Activated CD4-positive, alpha-beta memory T cell treated with anti-CD3 and anti-CD28 coated beads, Interleukin-2, amount 10 ng/mL, durations not matched to agents 7 days and 5 days (primary cell): ENCODE measurements at regions of chr17 and their contacts with region 1.

Region 1: DNA sequence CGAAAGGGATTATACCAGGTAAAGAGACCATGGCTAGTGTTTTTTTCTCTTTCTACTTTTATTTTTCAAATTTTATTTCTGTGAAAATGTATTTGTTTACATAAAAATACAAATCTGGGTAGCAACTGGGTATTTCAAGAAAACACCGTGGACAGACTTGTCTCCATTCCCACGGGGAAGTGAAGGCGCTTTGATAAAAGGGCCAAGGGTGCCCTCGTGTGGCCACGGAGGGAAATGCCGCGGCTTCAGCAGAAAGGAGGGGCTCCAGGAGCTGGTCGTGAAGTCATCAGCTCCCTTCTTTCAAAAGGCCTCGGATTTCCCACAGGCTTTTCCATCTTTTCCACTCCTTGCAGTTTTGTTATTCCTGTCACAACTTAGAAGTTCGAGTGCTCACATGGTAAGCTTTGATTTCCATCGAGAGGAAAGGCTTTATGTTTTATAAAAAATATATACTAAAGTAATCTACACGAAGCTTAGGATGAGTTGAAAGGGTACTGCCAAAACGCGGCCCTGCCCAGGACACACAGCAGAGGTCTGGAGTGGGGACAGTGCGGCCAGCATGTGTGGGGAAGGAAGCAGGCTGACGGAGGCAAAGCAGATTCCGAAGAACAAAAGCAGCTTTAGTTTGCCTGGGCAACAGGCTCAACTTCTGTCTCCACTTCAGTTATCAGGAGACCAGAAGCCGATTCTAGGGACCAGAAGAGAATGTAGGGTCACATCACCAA is 15.3 kb upstream of the MNT start:
- DNase-seq: peak; percentile 88
- H3K4me3 Mint-ChIP-seq: no peak overlapping the region
- H3K27ac Mint-ChIP-seq: no peak overlapping the region
- H3K4me1 Mint-ChIP-seq: peaks cover 2% of the 10 kb centered on the region
- H3K27me3 Mint-ChIP-seq: no peaks in the 10 kb centered on the region

Region 2: DNA sequence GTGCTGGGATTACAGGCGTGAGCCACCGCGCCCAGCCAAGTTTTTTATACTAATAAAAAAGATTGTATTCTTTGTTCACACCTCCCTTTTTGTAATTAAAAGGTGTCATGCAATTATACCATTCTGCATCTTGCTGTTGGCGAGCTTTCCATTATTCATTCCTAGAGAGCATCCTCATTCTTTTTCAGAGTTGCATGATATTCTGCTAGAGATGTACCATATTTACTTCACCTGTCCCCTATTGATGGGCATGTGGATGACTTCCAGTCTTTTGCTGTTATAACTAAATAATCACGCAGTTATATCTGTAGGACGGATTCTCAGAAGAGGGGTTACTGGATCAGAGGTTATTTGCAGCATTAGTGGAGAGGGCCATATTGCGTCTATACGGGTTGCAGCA is 61.9 kb before region 1 on chr17:
- CTCF ChIA-PET with region 1: interaction called, 13 read pairs
- POLR2A ChIA-PET with region 1: no interaction called
- DNase-seq: no peak
- H3K4me3 Mint-ChIP-seq: no peak overlapping the region
- H3K27ac Mint-ChIP-seq: peak overlapping the region; percentile 79
- H3K4me1 Mint-ChIP-seq: peaks cover 17% of the 10 kb centered on the region
- H3K27me3 Mint-ChIP-seq: no peaks in the 10 kb centered on the region

Region 3: GRCh38 chr17:2392252-2393173 is 23.7 kb before region 1 on chr17:
- CTCF ChIA-PET with region 1: interaction called, 80 read pairs
- POLR2A ChIA-PET with region 1: interaction called, 31 read pairs
- DNase-seq: peak; percentile 97
- H3K4me3 Mint-ChIP-seq: peak overlapping the region; percentile 90
- H3K27ac Mint-ChIP-seq: peak overlapping the region; percentile 90
- H3K4me1 Mint-ChIP-seq: peaks cover 67% of the 10 kb centered on the region
- H3K27me3 Mint-ChIP-seq: no peaks in the 10 kb centered on the region

Region 4: DNA sequence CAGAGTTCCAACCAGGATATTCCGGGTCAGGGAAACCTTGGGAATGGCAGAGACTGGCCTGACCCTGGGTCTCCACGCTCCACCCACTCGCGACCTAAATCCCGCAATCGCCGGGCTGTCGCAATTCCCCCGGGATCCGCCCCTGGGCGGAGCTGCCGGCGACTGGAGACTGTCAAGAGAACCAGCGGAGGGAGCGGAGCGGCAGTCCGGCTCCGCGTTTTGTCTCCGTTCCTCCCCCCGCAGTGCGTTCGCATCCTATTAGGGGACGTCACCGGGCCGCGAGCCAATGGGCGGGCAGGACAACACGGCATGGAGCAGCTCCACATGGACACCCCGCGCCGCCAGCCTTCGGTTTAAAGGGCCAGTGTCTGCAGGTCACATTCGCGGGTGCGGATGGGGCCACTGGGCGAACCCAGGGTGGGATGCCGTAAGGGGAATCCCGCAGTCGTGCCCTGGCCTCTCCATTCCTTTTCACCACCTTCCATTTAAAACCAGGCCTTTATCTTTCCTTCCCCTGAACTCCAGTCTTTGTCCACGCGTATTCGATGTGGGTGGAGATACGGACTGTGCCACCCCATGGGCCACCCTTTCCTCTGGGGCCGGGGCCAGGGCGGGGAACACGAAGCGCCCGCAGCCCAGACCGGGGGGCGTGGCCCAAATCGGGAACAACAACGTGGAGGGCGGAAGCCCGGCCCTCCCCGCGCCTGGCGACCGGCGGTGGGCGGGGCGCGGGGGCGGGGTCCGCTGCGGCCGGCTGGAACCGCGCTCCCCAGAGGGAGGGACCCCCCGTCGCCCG is 14.5 kb before region 1 on chr17:
- CTCF ChIA-PET with region 1: interaction called, 80 read pairs
- POLR2A ChIA-PET with region 1: interaction called, 20 read pairs
- DNase-seq: peak; percentile 100
- H3K4me3 Mint-ChIP-seq: peak overlapping the region; percentile 97
- H3K27ac Mint-ChIP-seq: peak overlapping the region; percentile 99
- H3K4me1 Mint-ChIP-seq: peaks cover 55% of the 10 kb centered on the region
- H3K27me3 Mint-ChIP-seq: no peaks in the 10 kb centered on the region

Region 5: DNA sequence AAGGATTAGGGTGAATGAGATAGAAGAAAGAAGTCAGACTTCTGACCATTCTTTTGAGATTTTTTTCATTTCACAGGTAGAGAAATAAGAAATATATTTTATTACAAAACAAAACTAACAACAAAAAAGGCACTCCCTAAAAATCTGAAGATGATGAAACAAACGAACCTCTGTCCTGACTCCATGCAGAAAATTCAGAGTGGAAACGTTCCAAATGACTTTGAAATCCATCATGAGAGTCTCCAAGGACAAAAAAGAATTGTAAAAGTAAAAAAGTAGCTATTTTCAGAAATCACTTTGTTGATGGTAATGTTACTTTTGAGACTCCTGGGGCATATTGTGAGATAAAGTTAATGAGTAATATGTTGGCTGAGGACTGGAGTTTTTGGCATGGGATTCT is 11.0 kb after region 1 on chr17:
- CTCF ChIA-PET with region 1: interaction called, 12 read pairs
- POLR2A ChIA-PET with region 1: no interaction called
- DNase-seq: no peak
- H3K4me3 Mint-ChIP-seq: no peak overlapping the region
- H3K27ac Mint-ChIP-seq: no peak overlapping the region
- H3K4me1 Mint-ChIP-seq: no peaks in the 10 kb centered on the region
- H3K27me3 Mint-ChIP-seq: no peaks in the 10 kb centered on the region

Region 6: DNA sequence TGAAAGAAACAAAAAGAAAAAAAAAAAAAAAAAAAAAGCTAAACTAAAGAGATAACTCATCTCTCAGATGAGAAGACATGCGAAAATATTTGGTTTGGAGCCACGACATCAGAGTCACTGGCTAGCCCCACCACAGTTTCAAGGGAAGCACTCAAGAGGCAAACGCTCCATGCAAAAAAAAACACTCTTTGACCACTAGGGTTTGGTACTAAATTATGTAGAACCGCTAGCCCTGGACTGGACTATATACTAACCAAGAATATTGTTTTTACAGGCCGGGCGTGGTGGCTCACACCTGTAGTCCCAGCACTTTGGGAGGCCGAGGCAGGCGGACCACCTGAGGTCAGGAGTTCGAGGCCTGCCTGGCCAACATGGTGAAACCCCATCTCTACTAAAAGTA is 58.2 kb after region 1 on chr17:
- CTCF ChIA-PET with region 1: no interaction called
- POLR2A ChIA-PET with region 1: no interaction called
- DNase-seq: no peak
- H3K4me3 Mint-ChIP-seq: no peak overlapping the region
- H3K27ac Mint-ChIP-seq: no peak overlapping the region
- H3K4me1 Mint-ChIP-seq: no peaks in the 10 kb centered on the region
- H3K27me3 Mint-ChIP-seq: no peaks in the 10 kb centered on the region